Mammary epithelial cell (primary cell): ENCODE measurements at regions of chr2 and their contacts with region 1.

Region 1: GRCh38 chr2:129253461-129253812 is 726.0 kb upstream of the RAB6C start:
- DNase-seq: no peak
- H3K4me3 ChIP-seq: no peak overlapping the region
- H3K27ac ChIP-seq: no peak overlapping the region
- H3K4me1 ChIP-seq: peaks cover 4% of the 10 kb centered on the region
- H3K27me3 ChIP-seq: no peaks in the 10 kb centered on the region
- CTCF ChIP-seq: peak; percentile 13 to 49

Region 2: GRCh38 chr2:128986026-128986715 is 267.3 kb before region 1 on chr2:
- CTCF ChIA-PET with region 1: no interaction called
- dilution Hi-C with region 1: no loop called
- in situ Hi-C with region 1: no loop called
- intact Hi-C with region 1: loop called (anchors 10 kb)
- DNase-seq: peak; percentile 31
- H3K4me3 ChIP-seq: no peak overlapping the region
- H3K27ac ChIP-seq: no peak overlapping the region
- H3K4me1 ChIP-seq: peaks cover 46% of the 10 kb centered on the region
- H3K27me3 ChIP-seq: no peaks in the 10 kb centered on the region
- CTCF ChIP-seq: no peak